CD8-positive, alpha-beta T cell (primary cell): ENCODE measurements at regions of chr14 and their contacts with region 1.

Region 1: GRCh38 chr14:64387694-64388532 is at the start of gene MTHFD1:
- DNase-seq: peak; percentile 88 to 98 (median 97)
- ATAC-seq: peak; percentile 84
- H3K4me3 ChIP-seq: peak within 1 kb of the TSS; percentile 79 to 80
- H3K4me3 Mint-ChIP-seq: peak within 1 kb of the TSS; percentile 99
- H3K27ac ChIP-seq: peak within 1 kb of the TSS; percentile 33 to 50
- H3K27ac Mint-ChIP-seq: peak within 1 kb of the TSS; percentile 95
- H3K4me1 ChIP-seq: peaks cover 20% of the 10 kb centered on the region
- H3K4me1 Mint-ChIP-seq: peaks cover 37% of the 10 kb centered on the region
- H3K27me3 ChIP-seq: no peaks in the 10 kb centered on the region
- H3K27me3 Mint-ChIP-seq: no peaks in the 10 kb centered on the region
- CTCF ChIP-seq: no peak
- total RNA-seq, gene MTHFD1: 14.4 to 15.6 TPM

Region 2: GRCh38 chr14:64338616-64339316 is 49.1 kb before region 1 on chr14:
- CTCF ChIA-PET with region 1: no interaction called
- POLR2A ChIA-PET with region 1: interaction called, 5 read pairs
- intact Hi-C with region 1: loop called (anchors 1 kb)
- DNase-seq: peak; percentile 54 to 93 (median 85)
- ATAC-seq: peak; percentile 79
- H3K4me3 ChIP-seq: peak overlapping the region; percentile 67 to 87
- H3K4me3 Mint-ChIP-seq: peak overlapping the region; percentile 97
- H3K27ac ChIP-seq: peak overlapping the region; percentile 38 to 58
- H3K27ac Mint-ChIP-seq: peak overlapping the region; percentile 96
- H3K4me1 ChIP-seq: peaks cover 19% of the 10 kb centered on the region
- H3K4me1 Mint-ChIP-seq: peaks cover 26% of the 10 kb centered on the region
- H3K27me3 ChIP-seq: no peaks in the 10 kb centered on the region
- H3K27me3 Mint-ChIP-seq: no peaks in the 10 kb centered on the region
- CTCF ChIP-seq: no peak

Region 3: GRCh38 chr14:64465191-64465822 is 77.4 kb after region 1 on chr14 and contains the start of gene AKAP5:
- CTCF ChIA-PET with region 1: interaction called, 3 read pairs
- POLR2A ChIA-PET with region 1: interaction called, 5 read pairs
- intact Hi-C with region 1: loop called (anchors 5 kb)
- DNase-seq: peak; percentile 17 to 84 (median 62)
- ATAC-seq: peak; percentile 93
- H3K4me3 ChIP-seq: peak within 1 kb of the TSS; percentile 45 to 59
- H3K4me3 Mint-ChIP-seq: peak within 1 kb of the TSS; percentile 89
- H3K27ac ChIP-seq: peak within 1 kb of the TSS; percentile 15 to 35
- H3K27ac Mint-ChIP-seq: peak within 1 kb of the TSS; percentile 68
- H3K4me1 ChIP-seq: peaks cover 24% of the 10 kb centered on the region
- H3K4me1 Mint-ChIP-seq: peaks cover 47% of the 10 kb centered on the region
- H3K27me3 ChIP-seq: no peaks in the 10 kb centered on the region
- H3K27me3 Mint-ChIP-seq: no peaks in the 10 kb centered on the region
- CTCF ChIP-seq: no peak
- total RNA-seq, gene AKAP5: 3.7 TPM

Region 4: GRCh38 chr14:64540208-64541157 is 152.6 kb after region 1 on chr14 and contains the start of gene HSPA2:
- CTCF ChIA-PET with region 1: no interaction called
- POLR2A ChIA-PET with region 1: no interaction called
- intact Hi-C with region 1: loop called in 1 of 2 experiments (anchors 5 kb)
- DNase-seq: peak; percentile 85 to 98 (median 93)
- ATAC-seq: peak; percentile 87
- H3K4me3 ChIP-seq: peak within 1 kb of the TSS; percentile 83 to 90
- H3K4me3 Mint-ChIP-seq: peak within 1 kb of the TSS; percentile 96
- H3K27ac ChIP-seq: peak within 1 kb of the TSS; percentile 42 to 56
- H3K27ac Mint-ChIP-seq: peak within 1 kb of the TSS; percentile 84
- H3K4me1 ChIP-seq: peaks cover 19% of the 10 kb centered on the region
- H3K4me1 Mint-ChIP-seq: peaks cover 26% of the 10 kb centered on the region
- H3K27me3 ChIP-seq: no peaks in the 10 kb centered on the region
- H3K27me3 Mint-ChIP-seq: no peaks in the 10 kb centered on the region
- CTCF ChIP-seq: peak; percentile 63
- total RNA-seq, gene HSPA2: 2.1 to 2.6 TPM

Region 5: DNA sequence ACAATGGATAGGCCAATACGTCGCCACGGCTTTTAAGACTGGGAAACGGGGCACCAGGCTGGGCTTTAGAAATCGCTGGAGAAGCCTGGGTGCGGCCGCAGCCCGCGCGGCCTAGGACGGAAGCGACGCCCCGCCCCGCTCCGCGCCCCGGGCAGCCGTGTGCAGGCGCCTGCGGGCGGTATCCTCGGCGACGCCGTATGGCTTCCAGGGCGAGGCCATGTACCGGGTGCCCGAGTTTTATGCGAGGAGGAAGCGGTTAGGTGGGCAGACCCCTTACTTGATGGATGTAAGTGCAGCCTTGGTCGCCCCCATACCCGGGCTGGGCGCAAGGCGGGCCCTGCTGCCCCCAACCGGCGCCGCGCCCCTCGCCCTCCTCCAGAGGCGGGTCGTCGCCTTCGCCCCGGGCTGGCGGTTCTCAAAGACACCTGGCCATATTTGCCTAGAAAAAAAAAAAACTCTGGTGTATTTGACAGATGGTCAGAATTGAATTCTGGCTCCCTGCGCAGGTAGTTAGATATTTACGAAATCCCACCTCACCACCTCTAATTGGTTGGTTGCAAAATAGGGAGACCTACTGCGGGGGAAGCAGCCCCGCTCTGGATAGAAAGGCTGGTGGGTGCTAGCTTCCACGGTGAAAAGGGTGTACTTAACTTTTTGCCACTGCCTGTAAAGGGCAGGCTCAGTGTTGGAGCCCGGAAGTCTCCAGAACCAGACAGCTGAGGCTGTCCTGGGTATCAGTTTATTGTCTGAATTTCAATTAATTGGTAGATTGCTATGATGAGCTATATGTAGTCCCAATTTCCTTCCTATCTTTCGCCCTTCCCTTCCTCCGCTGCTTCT is 162.1 kb after region 1 on chr14 and contains the start of gene PPP1R36:
- CTCF ChIA-PET with region 1: no interaction called
- POLR2A ChIA-PET with region 1: no interaction called
- intact Hi-C with region 1: loop called in 1 of 2 experiments (anchors 2 kb)
- DNase-seq: peak in 7 of 9 experiments; percentile 32 to 70 (median 51)
- ATAC-seq: peak; percentile 94
- H3K4me3 ChIP-seq: peak within 1 kb of the TSS; percentile 31
- H3K4me3 Mint-ChIP-seq: peak within 1 kb of the TSS; percentile 78
- H3K27ac ChIP-seq: no peak within 1 kb of the TSS
- H3K27ac Mint-ChIP-seq: no peak within 1 kb of the TSS
- H3K4me1 ChIP-seq: peaks cover 8% of the 10 kb centered on the region
- H3K4me1 Mint-ChIP-seq: peaks cover 18% of the 10 kb centered on the region
- H3K27me3 ChIP-seq: no peaks in the 10 kb centered on the region
- H3K27me3 Mint-ChIP-seq: no peaks in the 10 kb centered on the region
- CTCF ChIP-seq: no peak
- total RNA-seq, gene PPP1R36: 0.22 TPM in 1 of 2 experiments, not detected in the other